OCI-LY7 (cell line): ENCODE measurements at regions of chr2 and their contacts with region 1.

Region 1: GRCh38 chr2:37529830-37530415 is 141.5 kb downstream of the CDC42EP3 start:
- DNase-seq: no peak
- H3K4me3 ChIP-seq: no peak overlapping the region
- H3K27ac ChIP-seq: no peak overlapping the region
- H3K4me1 ChIP-seq: no peaks in the 10 kb centered on the region
- CTCF ChIP-seq: no peak

Region 2: DNA sequence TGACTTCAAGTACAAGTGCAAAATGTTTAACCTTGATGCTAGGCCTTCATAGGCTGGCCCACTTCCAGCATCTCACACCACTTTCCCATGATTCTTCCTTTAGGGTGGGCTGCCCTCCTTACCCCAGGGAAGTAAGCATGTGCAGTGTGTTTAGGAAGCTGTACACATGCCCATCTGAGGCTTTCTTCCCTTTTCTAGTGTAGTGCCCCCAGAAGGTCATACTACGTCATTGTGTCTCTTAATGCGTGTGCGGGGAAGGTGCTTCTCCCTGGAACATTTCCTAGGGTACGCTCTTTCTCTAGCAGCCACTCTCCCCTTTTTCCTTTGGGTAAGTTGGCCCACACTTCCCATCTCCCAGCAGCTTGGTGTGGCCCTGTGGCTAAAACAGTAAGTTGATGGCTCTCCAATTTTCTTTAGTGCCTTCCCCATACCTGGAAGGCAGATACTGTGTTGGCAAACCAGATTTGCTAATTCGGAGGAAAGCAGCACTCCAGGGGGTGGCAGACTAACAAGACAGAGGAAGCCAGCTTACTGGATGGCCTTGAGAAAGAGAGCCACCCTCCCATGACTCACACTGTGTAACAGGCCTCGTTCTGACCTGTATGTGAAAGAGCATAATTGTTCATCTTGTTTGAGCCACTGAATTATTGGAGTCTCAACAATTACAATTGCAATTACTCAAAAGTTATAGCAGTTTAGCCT is 340.3 kb before region 1 on chr2:
- CTCF ChIA-PET with region 1: no interaction called
- POLR2A ChIA-PET with region 1: no interaction called
- intact Hi-C with region 1: loop called (anchors 10 kb)
- DNase-seq: no peak
- H3K4me3 ChIP-seq: no peak overlapping the region
- H3K27ac ChIP-seq: no peak overlapping the region
- H3K4me1 ChIP-seq: no peaks in the 10 kb centered on the region
- CTCF ChIP-seq: peak; percentile 27; the same call in 1 of the 2 replicates